CD4-positive, alpha-beta T cell (primary cell): ENCODE measurements at regions of chr6 and their contacts with region 1.

Region 1: GRCh38 chr6:33200219-33201146 is at the starts of genes RXRB and SLC39A7:
- DNase-seq: peak; percentile 97 to 100 (median 99)
- ATAC-seq: peak; percentile 78
- H3K4me3 ChIP-seq: peak within 1 kb of the TSS; percentile 78
- H3K4me3 Mint-ChIP-seq: peak within 1 kb of the TSS; percentile 98
- H3K27ac ChIP-seq: peak within 1 kb of the TSS; percentile 97
- H3K27ac Mint-ChIP-seq: peak within 1 kb of the TSS; percentile 100
- H3K4me1 ChIP-seq: peaks cover 65% of the 10 kb centered on the region
- H3K4me1 Mint-ChIP-seq: peaks cover 79% of the 10 kb centered on the region
- H3K27me3 ChIP-seq: no peaks in the 10 kb centered on the region
- H3K27me3 Mint-ChIP-seq: no peaks in the 10 kb centered on the region
- CTCF ChIP-seq: no peak
- total RNA-seq, gene RXRB: 42.9 to 45.0 TPM
- total RNA-seq, gene SLC39A7: 8.6 to 9.6 TPM

Region 2: GRCh38 chr6:32127717-32128592 is 1072.5 kb before region 1 on chr6 and contains the start of gene ATF6B:
- CTCF ChIA-PET with region 1: no interaction called
- POLR2A ChIA-PET with region 1: no interaction called
- intact Hi-C with region 1: loop called in 1 of 2 experiments (anchors 10 kb)
- DNase-seq: peak; percentile 88 to 100 (median 96)
- ATAC-seq: peak; percentile 93
- H3K4me3 ChIP-seq: peak within 1 kb of the TSS; percentile 81
- H3K4me3 Mint-ChIP-seq: peak within 1 kb of the TSS; percentile 99
- H3K27ac ChIP-seq: peak within 1 kb of the TSS; percentile 63 to 77
- H3K27ac Mint-ChIP-seq: peak within 1 kb of the TSS; percentile 90
- H3K4me1 ChIP-seq: peaks cover 50% of the 10 kb centered on the region
- H3K4me1 Mint-ChIP-seq: peaks cover 52% of the 10 kb centered on the region
- H3K27me3 ChIP-seq: no peaks in the 10 kb centered on the region
- H3K27me3 Mint-ChIP-seq: no peaks in the 10 kb centered on the region
- CTCF ChIP-seq: no peak
- total RNA-seq, gene ATF6B: 72.2 to 75.6 TPM

Region 3: GRCh38 chr6:32406857-32407256 is 793.6 kb before region 1 on chr6 and contains the start of gene BTNL2:
- CTCF ChIA-PET with region 1: no interaction called
- POLR2A ChIA-PET with region 1: no interaction called
- intact Hi-C with region 1: no loop called
- DNase-seq: no peak
- ATAC-seq: no peak
- H3K4me3 ChIP-seq: no peak within 1 kb of the TSS
- H3K4me3 Mint-ChIP-seq: no peak within 1 kb of the TSS
- H3K27ac ChIP-seq: no peak within 1 kb of the TSS
- H3K27ac Mint-ChIP-seq: no peak within 1 kb of the TSS
- H3K4me1 ChIP-seq: no peaks in the 10 kb centered on the region
- H3K4me1 Mint-ChIP-seq: peaks cover 4% of the 10 kb centered on the region
- H3K27me3 ChIP-seq: peaks cover 12 to 14% of the 10 kb centered on the region in 2 experiments
- H3K27me3 Mint-ChIP-seq: peaks cover 56% of the 10 kb centered on the region
- CTCF ChIP-seq: no peak
- total RNA-seq, gene BTNL2: not detected

Region 4: GRCh38 chr6:32843979-32844838 is 356.3 kb before region 1 on chr6 and contains the start of gene PSMB8:
- CTCF ChIA-PET with region 1: no interaction called
- POLR2A ChIA-PET with region 1: no interaction called
- intact Hi-C with region 1: loop called in 1 of 2 experiments (anchors 10 kb)
- DNase-seq: peak; percentile 94 to 99 (median 98)
- ATAC-seq: peak; percentile 79
- H3K4me3 ChIP-seq: peak within 1 kb of the TSS; percentile 94
- H3K4me3 Mint-ChIP-seq: peak within 1 kb of the TSS; percentile 97
- H3K27ac ChIP-seq: peak within 1 kb of the TSS; percentile 99 to 100
- H3K27ac Mint-ChIP-seq: peak within 1 kb of the TSS; percentile 99
- H3K4me1 ChIP-seq: peaks cover 73% of the 10 kb centered on the region
- H3K4me1 Mint-ChIP-seq: peaks cover 96% of the 10 kb centered on the region
- H3K27me3 ChIP-seq: no peaks in the 10 kb centered on the region
- H3K27me3 Mint-ChIP-seq: no peaks in the 10 kb centered on the region
- CTCF ChIP-seq: no peak
- total RNA-seq, gene PSMB8: 120 to 121 TPM

Region 5: GRCh38 chr6:32940656-32941213 is 259.7 kb before region 1 on chr6 and contains the start of gene HLA-DMB:
- CTCF ChIA-PET with region 1: no interaction called
- POLR2A ChIA-PET with region 1: no interaction called
- intact Hi-C with region 1: no loop called
- DNase-seq: peak in 10 of 14 experiments; percentile 15 to 89 (median 42)
- ATAC-seq: peak; percentile 85
- H3K4me3 ChIP-seq: peak within 1 kb of the TSS; percentile 72
- H3K4me3 Mint-ChIP-seq: peak within 1 kb of the TSS; percentile 96
- H3K27ac ChIP-seq: peak within 1 kb of the TSS; percentile 86 to 89
- H3K27ac Mint-ChIP-seq: peak within 1 kb of the TSS; percentile 99
- H3K4me1 ChIP-seq: peaks cover 58% of the 10 kb centered on the region
- H3K4me1 Mint-ChIP-seq: peaks cover 60% of the 10 kb centered on the region
- H3K27me3 ChIP-seq: no peaks in the 10 kb centered on the region
- H3K27me3 Mint-ChIP-seq: no peaks in the 10 kb centered on the region
- CTCF ChIP-seq: no peak
- total RNA-seq, gene HLA-DMB: 4.6 to 6.0 TPM

Region 6: DNA sequence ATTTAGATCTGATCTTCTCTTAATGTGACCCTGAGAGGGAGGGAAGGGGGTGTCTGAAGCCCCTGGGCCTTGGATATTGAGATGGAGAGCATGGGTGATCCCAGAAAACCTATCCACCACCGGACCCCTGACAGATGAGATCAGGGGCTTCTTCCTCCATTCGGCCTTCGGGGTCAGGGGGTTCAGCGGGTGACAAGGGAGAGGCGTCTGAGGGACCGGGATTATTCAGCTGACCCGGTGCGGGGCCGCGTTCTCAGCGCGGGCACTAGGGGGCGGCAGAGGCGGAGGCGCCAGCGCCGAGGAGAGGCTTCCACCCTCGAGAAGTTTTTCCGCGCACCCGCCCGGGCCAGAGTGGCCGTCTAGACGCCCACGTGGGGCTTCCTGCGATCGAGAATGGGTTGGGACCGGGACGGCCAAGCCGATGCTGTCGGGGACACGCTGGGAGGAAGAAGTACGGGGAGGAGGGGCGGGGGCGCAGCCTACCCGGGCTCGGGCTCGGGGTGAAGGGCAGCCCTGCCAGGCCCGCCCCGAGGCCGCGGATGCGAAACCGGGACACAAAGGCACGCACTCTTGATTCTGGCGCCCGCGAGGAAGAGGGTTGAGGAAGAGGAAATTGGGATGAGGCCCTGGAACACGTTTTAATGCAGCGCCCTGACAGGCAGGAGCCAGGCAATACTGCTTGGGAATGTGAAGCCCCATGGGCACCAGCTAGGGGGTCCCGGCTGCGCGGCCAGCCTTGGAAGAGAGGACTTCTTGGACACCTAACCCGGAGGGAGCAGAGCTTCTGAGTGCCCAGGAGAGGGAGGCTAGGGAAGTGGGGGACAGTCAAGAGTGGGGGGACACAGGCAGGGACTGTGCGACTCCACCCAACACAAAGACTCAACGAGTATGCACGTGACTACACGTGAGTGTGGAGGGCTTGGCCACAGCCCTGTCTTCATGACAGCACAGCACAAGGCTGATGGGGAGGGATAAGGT is 38.8 kb before region 1 on chr6:
- CTCF ChIA-PET with region 1: interaction called, 20 read pairs
- POLR2A ChIA-PET with region 1: interaction called, 7 read pairs
- intact Hi-C with region 1: loop called (anchors 1 kb)
- DNase-seq: peak; percentile 64 to 89 (median 80)
- ATAC-seq: peak; percentile 97
- H3K4me3 ChIP-seq: peak overlapping the region; percentile 46
- H3K4me3 Mint-ChIP-seq: peak overlapping the region; percentile 87
- H3K27ac ChIP-seq: no peak overlapping the region
- H3K27ac Mint-ChIP-seq: no peak overlapping the region
- H3K4me1 ChIP-seq: peaks cover 16% of the 10 kb centered on the region
- H3K4me1 Mint-ChIP-seq: peaks cover 10% of the 10 kb centered on the region
- H3K27me3 ChIP-seq: no peaks in the 10 kb centered on the region
- H3K27me3 Mint-ChIP-seq: no peaks in the 10 kb centered on the region
- CTCF ChIP-seq: peak; percentile 90

Region 7: GRCh38 chr6:33217681-33218080 is 17.2 kb after region 1 on chr6:
- CTCF ChIA-PET with region 1: no interaction called
- POLR2A ChIA-PET with region 1: no interaction called
- intact Hi-C with region 1: no loop called
- DNase-seq: no peak
- ATAC-seq: no peak
- H3K4me3 ChIP-seq: no peak overlapping the region
- H3K4me3 Mint-ChIP-seq: no peak overlapping the region
- H3K27ac ChIP-seq: no peak overlapping the region
- H3K27ac Mint-ChIP-seq: no peak overlapping the region
- H3K4me1 ChIP-seq: peaks cover 16% of the 10 kb centered on the region
- H3K4me1 Mint-ChIP-seq: peaks cover 17% of the 10 kb centered on the region
- H3K27me3 ChIP-seq: peaks cover 0 to 14% of the 10 kb centered on the region in 2 experiments
- H3K27me3 Mint-ChIP-seq: peaks cover 69% of the 10 kb centered on the region
- CTCF ChIP-seq: no peak

Region 8: DNA sequence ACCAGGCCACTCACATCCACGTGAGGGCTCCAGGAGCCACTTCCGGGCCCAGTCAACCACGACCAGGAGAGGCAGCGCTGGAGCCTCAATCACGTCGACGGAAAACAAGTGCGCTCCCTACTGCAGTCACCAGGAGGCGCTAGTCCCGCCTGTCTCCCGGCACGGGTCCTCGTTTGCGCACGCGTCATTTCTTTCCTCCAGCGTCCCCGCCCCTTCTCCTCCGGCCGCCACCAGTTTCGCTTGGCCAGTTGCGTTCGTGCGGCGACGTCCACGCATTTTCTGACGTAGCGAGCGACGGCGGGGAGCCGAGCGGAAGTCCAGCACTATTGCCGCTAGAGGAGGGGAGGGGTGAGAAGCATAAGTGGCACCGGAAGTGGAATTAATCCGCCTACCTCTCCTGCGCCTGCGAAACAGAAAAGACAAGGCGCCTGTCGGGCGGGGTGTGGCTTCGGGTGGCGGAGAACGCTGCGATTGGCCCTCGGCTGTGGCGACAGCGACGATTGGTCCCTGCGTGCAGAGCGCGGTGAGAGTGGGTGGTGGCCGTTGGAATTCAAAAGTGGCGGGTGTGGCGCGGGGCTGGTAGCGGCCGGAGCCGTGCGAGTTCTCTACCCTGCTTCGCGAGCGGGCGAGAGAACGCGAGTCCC is 190.9 kb after region 1 on chr6 and contains the start of gene KIFC1:
- CTCF ChIA-PET with region 1: no interaction called
- POLR2A ChIA-PET with region 1: no interaction called
- intact Hi-C with region 1: loop called in 1 of 2 experiments (anchors 5 kb)
- DNase-seq: peak; percentile 98 to 100 (median 99)
- ATAC-seq: peak; percentile 86
- H3K4me3 ChIP-seq: peak within 1 kb of the TSS; percentile 65
- H3K4me3 Mint-ChIP-seq: peak within 1 kb of the TSS; percentile 87
- H3K27ac ChIP-seq: peak within 1 kb of the TSS; percentile 69 to 78
- H3K27ac Mint-ChIP-seq: peak within 1 kb of the TSS; percentile 91
- H3K4me1 ChIP-seq: peaks cover 25% of the 10 kb centered on the region
- H3K4me1 Mint-ChIP-seq: peaks cover 23% of the 10 kb centered on the region
- H3K27me3 ChIP-seq: no peaks in the 10 kb centered on the region
- H3K27me3 Mint-ChIP-seq: no peaks in the 10 kb centered on the region
- CTCF ChIP-seq: peak; percentile 99
- total RNA-seq, gene KIFC1: 1.2 to 1.6 TPM